Sigmoid colon (tissue), 7 donors: ENCODE measurements at regions of chr7 and their contacts with region 1.

Region 1: DNA sequence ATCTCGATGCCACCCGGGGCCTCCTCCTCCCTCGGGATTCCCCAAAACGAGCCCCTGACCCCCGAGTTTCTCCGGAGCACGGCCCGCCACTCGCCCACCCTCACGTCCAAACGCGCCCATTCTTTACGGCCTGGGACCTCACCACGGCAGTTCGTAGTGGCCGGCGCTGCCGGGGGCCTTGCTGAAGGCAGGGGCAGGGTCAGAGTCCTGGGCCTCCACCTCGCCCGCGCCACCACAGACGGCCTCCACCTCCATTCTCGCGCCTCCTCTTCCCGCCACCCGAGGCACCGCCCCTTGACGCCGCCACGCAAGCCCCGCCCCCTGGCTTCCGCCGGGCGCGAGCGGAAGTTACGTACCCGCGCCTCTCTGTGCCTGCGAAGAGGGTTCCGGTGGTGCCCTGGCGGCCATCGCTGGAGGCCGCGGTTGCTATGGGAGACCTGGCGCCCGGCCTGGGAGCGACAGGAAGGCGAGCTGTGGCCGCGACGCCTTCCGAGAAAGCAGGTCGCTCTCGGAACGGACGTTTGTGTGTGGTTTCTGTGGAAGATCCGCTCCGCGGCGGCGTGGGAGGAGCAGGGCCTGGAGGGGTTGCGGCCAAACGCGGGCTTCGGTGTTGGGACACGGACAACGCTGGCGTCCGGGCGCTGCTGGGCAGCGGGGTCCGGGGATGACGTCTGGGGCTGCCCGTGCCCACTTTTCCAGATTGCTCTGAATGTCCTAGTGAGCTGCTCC is at the start of gene RFC2:
- DNase-seq: peak; percentile 98
- H3K4me3 ChIP-seq: peak within 1 kb of the TSS; percentile 59 to 90 (median 72)
- H3K27ac ChIP-seq: peak within 1 kb of the TSS; percentile 89 to 96 (median 90)
- H3K4me1 ChIP-seq: peaks cover 0 to 21% (median 16%) of the 10 kb centered on the region in 4 donors
- H3K27me3 ChIP-seq: no peaks in the 10 kb centered on the region
- CTCF ChIP-seq: peak; percentile 21 to 47 (median 43)
- EP300 ChIP-seq: peak in 2 of 4 donors; percentile 44 to 70
- POLR2A ChIP-seq: peak; percentile 59 to 70
- total RNA-seq, gene RFC2: 3.3 to 17.8 (median 14.8) TPM

Region 2: GRCh38 chr7:74371381-74372341 is 117.4 kb after region 1 on chr7:
- intact Hi-C with region 1: loop called (anchors 5 kb)
- DNase-seq: no peak
- H3K4me3 ChIP-seq: no peak overlapping the region
- H3K27ac ChIP-seq: peak overlapping the region; percentile 36 to 82 (median 80)
- H3K4me1 ChIP-seq: peaks cover 0 to 34% (median 24%) of the 10 kb centered on the region in 4 donors
- H3K27me3 ChIP-seq: no peaks in the 10 kb centered on the region
- CTCF ChIP-seq: no peak
- EP300 ChIP-seq: no peak
- POLR2A ChIP-seq: no peak